ENCODE measurements at regions of chr11 and their contacts with region 1.

Region 1: GRCh38 chr11:65711785-65712632 is at the start of gene KAT5:
- DNase-seq: peak; percentile 99
- H3K4me3 Mint-ChIP-seq: peak within 1 kb of the TSS; percentile 89
- H3K27ac Mint-ChIP-seq: peak within 1 kb of the TSS; percentile 91
- H3K4me1 Mint-ChIP-seq: peaks cover 25% of the 10 kb centered on the region
- H3K27me3 Mint-ChIP-seq: no peaks in the 10 kb centered on the region
- total RNA-seq, gene KAT5: 76.3 and 79.4 TPM in 2 replicates

Region 2: DNA sequence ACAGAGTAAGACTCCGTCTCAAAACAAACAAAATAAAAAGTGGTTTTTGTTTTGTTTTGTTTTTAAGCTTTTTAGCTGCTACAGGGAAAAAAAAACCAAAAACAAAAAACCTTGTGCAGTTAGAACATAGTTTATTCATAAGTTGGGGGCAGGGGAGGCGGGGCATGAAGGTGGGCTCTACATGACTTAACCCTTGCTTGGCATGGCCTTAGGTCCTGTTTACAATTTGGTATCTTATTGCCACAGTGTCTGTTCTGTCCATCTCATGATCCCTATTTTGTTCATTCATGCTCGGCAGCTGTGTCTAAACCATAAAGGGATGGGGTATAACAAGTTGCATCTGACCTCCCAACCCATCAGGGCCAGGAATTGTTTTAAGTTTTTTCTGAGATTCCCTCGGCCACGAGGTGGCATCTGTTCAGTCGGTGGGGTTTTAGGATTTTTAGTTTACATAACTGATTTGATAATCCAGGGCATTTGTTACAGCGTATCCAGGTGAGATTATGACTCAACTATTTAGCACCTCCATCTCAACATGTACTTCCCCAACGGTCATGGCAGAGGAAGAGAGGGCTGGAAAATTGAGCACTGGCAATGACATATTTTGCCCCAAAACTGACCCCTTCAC is 61.9 kb after region 1 on chr11:
- intact Hi-C with region 1: loop called (anchors 5 kb)
- DNase-seq: no peak
- H3K4me3 Mint-ChIP-seq: no peak overlapping the region
- H3K27ac Mint-ChIP-seq: no peak overlapping the region
- H3K4me1 Mint-ChIP-seq: peaks cover 19% of the 10 kb centered on the region
- H3K27me3 Mint-ChIP-seq: no peaks in the 10 kb centered on the region

Region 3: DNA sequence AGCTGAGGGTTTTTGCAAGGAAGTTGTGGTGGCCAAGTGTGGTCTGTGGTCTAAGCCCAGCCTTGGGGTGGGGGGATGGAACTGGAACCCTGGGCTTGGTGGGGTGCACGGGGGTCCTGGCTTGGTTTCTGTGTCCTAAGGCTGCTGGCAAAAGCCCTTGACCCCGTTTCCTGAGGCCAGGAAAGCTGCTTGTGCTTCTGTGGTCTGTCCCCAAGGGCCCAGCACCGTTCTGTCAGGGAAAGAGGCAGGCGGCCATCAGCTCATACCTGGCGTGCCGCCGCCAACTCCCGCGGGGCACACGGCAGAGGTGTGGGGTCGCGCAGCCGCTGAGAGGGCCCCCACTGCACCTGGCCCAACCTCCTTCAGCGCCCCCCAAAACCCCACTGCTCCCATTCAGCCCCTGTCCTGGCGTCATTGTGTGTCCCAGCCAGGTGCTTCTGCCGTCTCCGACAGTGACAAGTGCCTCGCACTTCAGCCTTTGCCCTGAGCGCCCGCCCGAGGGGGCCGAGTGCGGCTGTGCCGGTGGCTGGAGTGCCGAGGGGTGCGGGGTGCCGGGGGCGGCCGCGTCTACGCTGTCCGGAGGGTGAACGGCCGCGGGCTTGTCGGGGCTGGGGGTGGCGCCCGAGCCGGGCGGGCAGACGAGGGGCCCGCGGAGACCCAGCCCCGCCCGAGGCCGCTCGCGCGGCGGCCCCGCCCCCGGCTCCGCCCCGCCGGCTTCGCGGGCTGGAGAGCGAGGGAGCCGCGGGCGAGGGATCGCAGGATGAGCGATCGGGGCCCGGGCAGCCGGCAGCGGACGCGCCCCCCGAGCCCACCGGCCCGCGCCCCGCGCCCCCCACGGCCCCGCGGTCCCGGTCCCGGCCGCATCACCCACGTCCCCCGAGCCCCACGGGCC is 565.7 kb after region 1 on chr11 and contains the start of gene CNIH2:
- intact Hi-C with region 1: no loop called
- DNase-seq: peak; percentile 41
- H3K4me3 Mint-ChIP-seq: peak within 1 kb of the TSS; percentile 68
- H3K27ac Mint-ChIP-seq: no peak within 1 kb of the TSS
- H3K4me1 Mint-ChIP-seq: peaks cover 16% of the 10 kb centered on the region
- H3K27me3 Mint-ChIP-seq: peaks cover 14% of the 10 kb centered on the region
- total RNA-seq, gene CNIH2: 0.91 and 1.5 TPM in 2 replicates

Measured in activated T-helper 2 cell treated with anti-CD3 and anti-CD28 coated beads, Interferon-gamma antibody, Interleukin-2, Interleukin-4, amounts not matched to agents 10 μg/mL and 5 μg/mL and 100 μg/mL, durations not matched to agents 14 hours and 24 hours and 36 hours (primary cell).